GM13977 (cell line): ENCODE measurements at regions of chr21 and their contacts with region 1.

Region 1: GRCh38 chr21:42818328-42818749 is 61.0 kb downstream of the WDR4 start:
- DNase-seq: peak; percentile 44
- CTCF ChIP-seq: peak; percentile 80

Region 2: DNA sequence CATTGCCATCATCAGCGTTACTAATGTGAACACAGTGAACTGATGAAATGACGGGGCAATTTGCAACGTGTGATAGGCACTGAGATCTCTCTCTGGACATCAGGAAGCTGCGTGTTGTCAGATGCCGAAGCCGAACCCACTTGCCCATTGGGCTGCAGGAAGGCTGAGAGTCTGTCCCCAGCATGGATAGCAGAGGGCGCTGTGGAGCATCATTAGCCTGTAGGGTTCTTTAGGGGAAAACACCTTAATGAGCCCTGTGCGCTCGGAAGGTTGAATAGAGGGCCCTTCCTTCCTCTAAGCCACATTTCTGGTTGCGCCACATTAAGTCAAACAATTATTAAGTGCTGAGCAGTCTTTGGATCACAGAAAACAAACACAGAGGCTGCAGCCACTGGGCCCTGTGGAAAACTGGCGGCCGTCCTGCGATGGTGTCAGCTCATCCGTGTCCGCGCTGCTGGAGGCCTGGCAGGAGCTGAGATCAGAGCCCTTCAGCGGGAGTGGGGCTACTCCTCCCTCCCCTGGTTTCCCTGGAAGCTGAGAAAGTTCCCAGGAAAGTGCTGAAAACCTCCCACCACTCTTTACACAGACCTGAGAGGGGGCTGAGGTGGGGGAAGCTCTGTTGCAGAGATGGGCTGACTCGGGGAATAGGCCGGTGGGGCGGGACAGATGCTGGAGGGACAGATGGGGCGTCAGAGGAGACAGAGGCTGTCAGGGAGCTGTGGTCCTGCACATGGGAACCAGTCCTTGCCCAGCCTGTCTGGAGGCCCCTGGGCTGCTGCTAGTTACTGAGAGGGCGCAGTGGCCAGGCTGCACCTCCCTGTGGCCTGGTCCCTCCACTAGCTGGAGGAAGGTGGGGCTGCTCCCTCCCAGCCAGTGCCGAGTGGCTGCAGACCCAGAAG is 480.3 kb before region 1 on chr21:
- in situ Hi-C with region 1: loop called (anchors 25 kb)
- DNase-seq: peak; percentile 68
- CTCF ChIP-seq: peak; percentile 83

Region 3: DNA sequence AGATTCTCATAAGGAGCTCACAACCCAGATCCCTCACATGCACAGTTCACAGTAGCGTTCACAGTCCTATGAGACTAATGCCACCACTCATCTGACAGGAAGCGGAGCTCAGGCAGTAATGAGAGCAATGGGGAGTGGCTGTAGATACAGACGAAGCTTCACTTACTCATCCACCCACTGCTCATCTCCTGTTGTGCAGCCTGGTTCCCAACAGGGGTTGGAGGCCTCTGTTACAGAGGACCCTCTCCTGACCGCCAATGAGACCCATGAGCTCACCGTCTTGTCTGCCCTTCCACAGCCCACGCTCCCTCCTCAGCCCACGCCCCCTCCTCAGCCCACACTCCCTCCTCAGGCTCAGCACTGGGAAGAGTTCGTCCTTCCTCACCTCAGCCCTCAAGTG is 361.9 kb before region 1 on chr21:
- in situ Hi-C with region 1: no loop called
- DNase-seq: no peak
- CTCF ChIP-seq: no peak

Region 4: DNA sequence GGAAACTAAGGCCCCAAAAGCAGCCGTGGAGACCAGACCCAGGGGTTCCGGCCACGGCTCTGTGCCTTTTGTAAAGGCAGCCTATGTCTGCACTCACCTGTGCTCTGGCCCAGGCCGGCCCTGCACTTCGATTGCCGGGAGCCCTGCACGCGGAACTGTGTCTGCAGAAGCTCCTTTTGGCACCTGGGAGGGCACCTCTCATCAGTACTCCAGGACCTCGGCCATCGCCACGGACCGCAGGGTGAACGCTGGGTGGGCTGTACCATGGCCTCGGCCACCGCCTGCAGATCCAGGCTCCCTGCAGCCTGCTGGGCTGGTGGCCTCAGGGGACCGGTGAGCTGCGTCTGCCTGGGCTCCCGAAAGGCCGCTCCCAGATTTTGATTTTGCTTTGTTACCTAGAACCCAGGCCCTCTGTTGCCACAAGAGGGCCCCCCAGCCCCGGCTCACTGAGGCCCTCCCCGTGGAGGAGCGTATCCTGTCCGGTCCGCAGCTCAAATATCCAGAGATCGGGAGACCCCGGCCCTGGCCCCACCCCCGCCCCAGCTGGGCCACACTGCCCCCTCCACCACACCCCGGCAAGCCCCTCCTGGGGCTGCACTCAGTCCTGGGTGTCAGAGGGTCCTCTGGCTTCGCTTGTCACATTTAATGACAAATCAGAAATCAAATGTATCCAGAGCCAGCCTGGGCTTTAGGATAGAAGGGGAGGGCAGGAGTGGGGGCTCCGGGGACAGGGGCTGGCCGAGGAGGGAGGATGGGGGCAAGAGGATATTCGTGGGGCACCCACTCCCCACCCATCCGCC is 225.1 kb before region 1 on chr21:
- in situ Hi-C with region 1: loop called (anchors 10 kb)
- DNase-seq: peak; percentile 93
- CTCF ChIP-seq: peak; percentile 84